Panc1 (cell line): ENCODE measurements at regions of chr10 and their contacts with region 1.

Region 1: DNA sequence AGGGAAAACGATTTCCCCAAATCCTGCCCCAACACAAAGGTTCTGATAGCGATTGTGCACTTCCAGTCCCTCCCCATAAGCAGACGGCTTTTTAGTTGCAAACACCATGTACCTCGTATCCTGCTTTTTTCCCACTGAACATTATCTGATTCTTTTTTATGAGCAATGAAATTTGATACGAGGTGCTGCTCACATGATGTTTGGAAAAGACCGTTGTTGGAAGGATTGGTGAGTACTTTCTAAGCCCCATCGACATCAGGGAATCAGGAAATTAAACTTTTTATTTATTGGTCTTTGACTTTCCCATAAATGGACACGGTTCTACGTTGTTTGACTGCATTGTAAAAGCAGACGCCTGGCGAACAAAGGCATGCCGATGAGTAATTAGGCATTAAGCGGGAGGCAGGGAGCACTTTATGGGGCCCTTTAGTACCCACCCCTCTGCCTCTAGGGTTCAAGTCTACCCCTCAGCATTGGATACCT is 49.4 kb downstream of the TEX36 start:
- DNase-seq: no peak
- ATAC-seq: no peak
- H3K4me3 ChIP-seq: no peak overlapping the region
- H3K27ac ChIP-seq: no peak overlapping the region
- H3K4me1 ChIP-seq: peaks cover 4% of the 10 kb centered on the region; the same call in 1 of the 2 replicates
- H3K27me3 ChIP-seq: peaks cover 14% of the 10 kb centered on the region
- CTCF ChIP-seq: no peak

Region 2: DNA sequence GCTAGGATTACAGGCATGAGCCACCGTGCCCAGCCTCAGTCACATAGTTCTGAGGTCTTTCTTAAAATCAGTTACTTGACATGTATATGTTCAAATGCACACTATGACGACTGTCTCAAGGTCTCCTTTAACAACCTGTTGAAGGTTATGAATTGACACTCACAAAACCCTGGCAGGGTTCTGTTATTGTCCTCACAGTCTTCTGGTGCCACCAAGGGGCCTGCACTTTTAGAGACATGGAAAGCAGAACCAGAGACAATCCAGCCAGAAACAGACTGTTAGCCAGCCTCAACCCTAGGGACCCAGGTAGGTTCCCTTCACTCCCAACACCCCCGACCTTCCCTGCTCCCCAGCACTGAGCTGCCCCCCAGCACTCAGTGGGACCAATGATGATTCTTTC is 23.0 kb after region 1 on chr10:
- CTCF ChIA-PET with region 1: no interaction called
- POLR2A ChIA-PET with region 1: interaction called, 13 read pairs
- in situ Hi-C with region 1: no loop called
- intact Hi-C with region 1: no loop called
- DNase-seq: no peak
- ATAC-seq: no peak; the same call in 1 of the 2 replicates
- H3K4me3 ChIP-seq: no peak overlapping the region
- H3K27ac ChIP-seq: no peak overlapping the region
- H3K4me1 ChIP-seq: no peaks in the 10 kb centered on the region
- H3K27me3 ChIP-seq: peaks cover 5% of the 10 kb centered on the region
- CTCF ChIP-seq: no peak